AG04449 (cell line): ENCODE measurements at regions of chr17 and their contacts with region 1.

Region 1: GRCh38 chr17:82225368-82226029 is 3.3 kb upstream of the SLC16A3 start:
- DNase-seq: no peak
- H3K4me3 ChIP-seq: no peak overlapping the region
- CTCF ChIP-seq: no peak

Region 2: GRCh38 chr17:82077617-82078358 is 147.7 kb before region 1 on chr17:
- CTCF ChIA-PET with region 1: no interaction called
- POLR2A ChIA-PET with region 1: no interaction called
- DNase-seq: no peak
- H3K4me3 ChIP-seq: no peak overlapping the region
- CTCF ChIP-seq: no peak

Region 3: GRCh38 chr17:82236142-82236981 is 10.9 kb after region 1 on chr17:
- CTCF ChIA-PET with region 1: interaction called, 14 read pairs
- POLR2A ChIA-PET with region 1: interaction called, 101 read pairs
- DNase-seq: no peak
- H3K4me3 ChIP-seq: no peak overlapping the region
- CTCF ChIP-seq: peak; percentile 76